IMR-90 (cell line): ENCODE measurements at regions of chr5 and their contacts with region 1.

Region 1: DNA sequence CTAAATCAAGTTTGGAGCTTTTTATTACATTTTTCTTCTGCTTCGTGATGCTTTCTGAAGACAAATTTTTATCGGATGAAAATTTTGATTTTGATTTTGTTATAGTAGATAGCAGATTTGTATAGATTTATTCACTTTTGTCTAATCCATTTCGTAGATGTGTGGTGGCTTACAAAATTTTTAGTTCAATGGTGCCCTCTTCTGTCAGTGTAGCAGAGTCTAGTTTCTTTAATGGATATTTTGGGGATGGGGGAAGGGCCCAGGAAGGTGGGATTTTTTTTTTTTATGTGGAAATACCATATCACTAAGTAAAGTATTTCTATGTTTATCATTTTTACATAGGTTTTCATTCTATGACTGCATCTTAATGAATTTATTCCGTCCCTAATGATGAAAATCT is 259.9 kb upstream of the TARS1 start:
- DNase-seq: peak; percentile 70
- ATAC-seq: peak; percentile 78
- H3K4me3 ChIP-seq: no peak overlapping the region
- H3K27ac ChIP-seq: no peak overlapping the region
- H3K4me1 ChIP-seq: no peaks in the 10 kb centered on the region
- H3K27me3 ChIP-seq: no peaks in the 10 kb centered on the region
- CTCF ChIP-seq: peak; percentile 80
- POLR2A ChIP-seq: no peak
- RAD21 ChIP-seq: peak; percentile 83

Region 2: GRCh38 chr5:32489791-32490582 is 690.9 kb before region 1 on chr5:
- CTCF ChIA-PET with region 1: interaction called, 3 read pairs
- POLR2A ChIA-PET with region 1: no interaction called
- dilution Hi-C with region 1: no loop called
- in situ Hi-C with region 1: loop called (anchors 25 kb)
- intact Hi-C with region 1: no loop called
- DNase-seq: peak; percentile 87
- ATAC-seq: peak; percentile 86
- H3K4me3 ChIP-seq: no peak overlapping the region
- H3K27ac ChIP-seq: peak overlapping the region; percentile 53; the same call in 1 of the 2 replicates
- H3K4me1 ChIP-seq: no peaks in the 10 kb centered on the region
- H3K27me3 ChIP-seq: no peaks in the 10 kb centered on the region
- CTCF ChIP-seq: peak; percentile 78
- POLR2A ChIP-seq: no peak
- RAD21 ChIP-seq: peak; percentile 81

Region 3: DNA sequence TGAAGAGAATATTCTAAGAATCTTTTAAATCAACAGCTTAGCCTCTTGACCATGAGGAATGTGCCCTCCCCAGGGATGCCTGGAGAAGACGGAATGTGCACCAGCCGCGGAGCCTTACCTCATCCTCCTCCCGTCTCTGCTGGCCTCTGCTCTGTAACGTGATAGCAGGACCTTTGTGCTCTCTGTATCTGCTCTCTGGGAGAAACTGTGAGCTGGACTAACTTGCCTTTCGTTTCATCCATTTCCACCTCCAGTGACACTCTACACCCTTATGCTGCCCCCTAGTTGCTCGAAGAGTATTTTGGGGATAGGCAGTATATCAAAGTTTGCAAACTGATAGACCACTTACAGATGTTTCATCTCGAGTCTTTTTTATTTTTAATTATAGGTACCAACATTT is 328.4 kb before region 1 on chr5:
- CTCF ChIA-PET with region 1: no interaction called
- POLR2A ChIA-PET with region 1: no interaction called
- dilution Hi-C with region 1: no loop called
- in situ Hi-C with region 1: no loop called
- intact Hi-C with region 1: loop called (anchors 1 kb)
- DNase-seq: peak; percentile 89
- ATAC-seq: peak; percentile 97
- H3K4me3 ChIP-seq: no peak overlapping the region
- H3K27ac ChIP-seq: no peak overlapping the region
- H3K4me1 ChIP-seq: peaks cover 8% of the 10 kb centered on the region; the same call in 1 of the 2 replicates
- H3K27me3 ChIP-seq: no peaks in the 10 kb centered on the region
- CTCF ChIP-seq: peak; percentile 55
- POLR2A ChIP-seq: no peak
- RAD21 ChIP-seq: peak; percentile 60

Region 4: GRCh38 chr5:33059081-33059480 is 121.8 kb before region 1 on chr5:
- CTCF ChIA-PET with region 1: no interaction called
- POLR2A ChIA-PET with region 1: no interaction called
- dilution Hi-C with region 1: no loop called
- in situ Hi-C with region 1: no loop called
- intact Hi-C with region 1: no loop called
- DNase-seq: no peak
- ATAC-seq: no peak
- H3K4me3 ChIP-seq: no peak overlapping the region
- H3K27ac ChIP-seq: no peak overlapping the region
- H3K4me1 ChIP-seq: no peaks in the 10 kb centered on the region
- H3K27me3 ChIP-seq: no peaks in the 10 kb centered on the region
- CTCF ChIP-seq: no peak
- POLR2A ChIP-seq: no peak
- RAD21 ChIP-seq: no peak

Region 5: DNA sequence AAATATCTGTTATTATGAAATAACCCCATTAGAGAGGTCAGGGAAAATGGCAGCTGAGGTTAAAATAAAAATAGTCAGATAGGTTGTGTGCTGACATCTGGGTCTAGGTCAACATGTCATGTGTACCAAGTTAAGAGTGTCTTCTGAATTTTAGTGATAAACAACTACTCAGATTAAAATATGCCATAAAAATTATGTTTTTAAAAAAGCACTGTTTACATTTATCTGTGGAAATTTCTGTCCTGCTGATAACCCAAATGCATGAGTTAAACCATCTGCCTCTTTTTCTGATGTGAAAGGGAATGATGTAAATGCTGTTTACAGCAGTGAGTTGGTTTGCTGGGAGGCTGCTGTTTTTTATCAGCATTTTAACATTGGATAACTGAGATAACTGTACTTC is 101.4 kb before region 1 on chr5:
- CTCF ChIA-PET with region 1: no interaction called
- POLR2A ChIA-PET with region 1: no interaction called
- dilution Hi-C with region 1: no loop called
- in situ Hi-C with region 1: no loop called
- intact Hi-C with region 1: loop called (anchors 5 kb)
- DNase-seq: peak; percentile 53
- ATAC-seq: peak; percentile 72
- H3K4me3 ChIP-seq: no peak overlapping the region
- H3K27ac ChIP-seq: peak overlapping the region; percentile 93; the same call in 1 of the 2 replicates
- H3K4me1 ChIP-seq: peaks cover 8% of the 10 kb centered on the region
- H3K27me3 ChIP-seq: no peaks in the 10 kb centered on the region
- CTCF ChIP-seq: no peak
- POLR2A ChIP-seq: no peak
- RAD21 ChIP-seq: no peak

Region 6: GRCh38 chr5:33195431-33196165 is 14.7 kb after region 1 on chr5:
- CTCF ChIA-PET with region 1: no interaction called
- POLR2A ChIA-PET with region 1: no interaction called
- dilution Hi-C with region 1: no loop called
- in situ Hi-C with region 1: no loop called
- intact Hi-C with region 1: no loop called
- DNase-seq: peak; percentile 63
- ATAC-seq: peak; percentile 93
- H3K4me3 ChIP-seq: no peak overlapping the region
- H3K27ac ChIP-seq: no peak overlapping the region
- H3K4me1 ChIP-seq: no peaks in the 10 kb centered on the region; the same call in 1 of the 2 replicates
- H3K27me3 ChIP-seq: no peaks in the 10 kb centered on the region
- CTCF ChIP-seq: no peak
- POLR2A ChIP-seq: no peak
- RAD21 ChIP-seq: no peak

Region 7: DNA sequence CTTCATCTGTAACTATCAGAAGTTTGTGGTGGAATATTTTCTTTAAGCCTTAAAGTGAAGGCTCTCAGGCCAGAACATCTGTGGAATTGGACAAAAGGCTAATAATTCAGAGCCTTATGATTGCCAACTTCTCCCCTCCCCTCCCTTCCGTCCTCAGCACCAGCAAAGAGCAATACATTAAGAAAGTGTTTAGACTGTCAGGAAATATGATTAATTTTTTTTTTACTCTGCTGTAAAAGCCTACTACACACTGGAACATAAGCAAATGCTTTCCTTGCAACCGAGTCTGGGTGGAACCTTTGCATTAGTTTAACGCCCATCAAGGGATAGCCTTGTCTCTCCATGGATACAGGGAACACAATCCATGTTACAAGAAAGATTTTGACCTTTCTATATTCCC is 149.5 kb after region 1 on chr5:
- CTCF ChIA-PET with region 1: no interaction called
- POLR2A ChIA-PET with region 1: no interaction called
- dilution Hi-C with region 1: no loop called
- in situ Hi-C with region 1: no loop called
- intact Hi-C with region 1: no loop called
- DNase-seq: no peak
- ATAC-seq: no peak
- H3K4me3 ChIP-seq: no peak overlapping the region
- H3K27ac ChIP-seq: no peak overlapping the region
- H3K4me1 ChIP-seq: peaks cover under 1% of the 10 kb centered on the region; the same call in 1 of the 2 replicates
- H3K27me3 ChIP-seq: no peaks in the 10 kb centered on the region
- CTCF ChIP-seq: no peak
- POLR2A ChIP-seq: no peak
- RAD21 ChIP-seq: no peak

Region 8: GRCh38 chr5:33379757-33380156 is 198.9 kb after region 1 on chr5:
- CTCF ChIA-PET with region 1: no interaction called
- POLR2A ChIA-PET with region 1: no interaction called
- dilution Hi-C with region 1: no loop called
- in situ Hi-C with region 1: no loop called
- intact Hi-C with region 1: loop called (anchors 5 kb)
- DNase-seq: peak; percentile 47
- ATAC-seq: no peak
- H3K4me3 ChIP-seq: no peak overlapping the region
- H3K27ac ChIP-seq: no peak overlapping the region
- H3K4me1 ChIP-seq: no peaks in the 10 kb centered on the region
- H3K27me3 ChIP-seq: no peaks in the 10 kb centered on the region
- CTCF ChIP-seq: peak; percentile 57
- POLR2A ChIP-seq: no peak
- RAD21 ChIP-seq: peak; percentile 77